ENCODE measurements at regions of chr4 and their contacts with region 1.

Region 1: DNA sequence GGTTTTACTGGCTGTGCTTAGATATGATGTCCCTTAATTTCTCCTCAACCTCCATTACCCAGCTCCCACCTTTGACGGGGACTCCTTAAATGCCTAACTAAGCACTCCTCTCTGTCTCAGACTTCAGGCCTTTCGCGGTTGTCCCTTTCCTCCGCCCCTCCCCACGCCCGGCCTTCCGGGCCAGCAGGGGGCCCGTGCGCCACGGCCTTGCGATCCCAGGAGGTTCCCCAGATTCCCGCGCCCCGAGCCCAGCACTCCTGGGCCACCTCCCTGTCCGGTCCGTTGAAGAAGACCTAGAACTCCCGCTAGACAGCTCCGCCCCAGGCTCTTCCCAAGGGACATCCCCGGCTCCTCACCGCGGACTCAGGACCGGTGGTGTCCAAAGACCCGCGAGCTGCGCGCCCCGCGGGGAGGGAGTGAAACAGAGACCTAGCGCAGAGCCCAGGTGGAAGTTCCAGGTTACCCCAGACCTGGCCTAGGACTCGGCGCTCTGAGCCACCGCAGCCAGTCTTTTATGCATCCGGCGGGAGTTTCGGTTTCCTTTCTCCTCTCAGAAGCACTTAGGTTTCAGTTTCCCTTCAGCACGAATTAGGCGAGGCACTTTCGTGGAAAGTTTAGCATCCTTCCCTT is at the start of gene DDX60:
- DNase-seq: peak; percentile 94
- H3K4me3 Mint-ChIP-seq: peak within 1 kb of the TSS; percentile 97
- H3K27ac Mint-ChIP-seq: peak within 1 kb of the TSS; percentile 99
- H3K4me1 Mint-ChIP-seq: peaks cover 67% of the 10 kb centered on the region
- H3K27me3 Mint-ChIP-seq: no peaks in the 10 kb centered on the region
- total RNA-seq, gene DDX60: 125 to 127 TPM

Region 2: GRCh38 chr4:168028568-168028967 is 289.8 kb before region 1 on chr4:
- CTCF ChIA-PET with region 1: no interaction called
- POLR2A ChIA-PET with region 1: no interaction called
- DNase-seq: no peak
- H3K4me3 Mint-ChIP-seq: no peak overlapping the region
- H3K27ac Mint-ChIP-seq: no peak overlapping the region
- H3K4me1 Mint-ChIP-seq: no peaks in the 10 kb centered on the region
- H3K27me3 Mint-ChIP-seq: no peaks in the 10 kb centered on the region

Region 3: DNA sequence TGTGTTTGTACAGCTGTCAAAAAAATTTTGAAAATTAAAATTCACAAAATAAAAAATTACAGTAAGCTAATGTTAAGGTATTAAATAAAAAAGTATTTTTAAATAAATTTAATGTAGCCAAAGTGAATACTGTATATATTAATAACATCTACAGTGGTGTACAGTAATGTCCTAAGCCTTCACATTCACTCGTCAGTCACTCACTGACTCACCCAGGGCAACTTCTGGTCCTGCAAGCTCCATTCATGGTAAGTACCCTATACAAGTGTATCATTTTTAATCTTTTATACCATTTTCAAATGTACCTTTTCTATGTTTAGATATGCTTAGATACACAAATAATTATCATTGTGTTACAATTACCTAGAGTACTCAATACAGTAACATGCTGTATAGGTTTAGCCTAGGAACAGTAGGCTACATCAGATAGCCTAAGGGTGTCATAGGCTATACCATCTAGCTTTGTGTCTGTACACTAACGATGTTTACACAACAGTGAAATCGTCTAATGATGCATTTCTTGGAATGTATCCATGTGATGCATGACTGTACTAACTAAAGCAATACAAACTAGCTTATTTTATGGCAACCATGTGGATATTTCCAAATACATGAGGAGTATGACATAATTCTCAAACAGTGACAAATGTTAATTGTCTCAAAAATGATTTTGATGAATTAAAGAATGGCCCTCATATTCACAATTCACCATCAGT is 13.5 kb before region 1 on chr4:
- CTCF ChIA-PET with region 1: interaction called, 10 read pairs
- POLR2A ChIA-PET with region 1: no interaction called
- DNase-seq: no peak
- H3K4me3 Mint-ChIP-seq: no peak overlapping the region
- H3K27ac Mint-ChIP-seq: no peak overlapping the region
- H3K4me1 Mint-ChIP-seq: peaks cover 40% of the 10 kb centered on the region
- H3K27me3 Mint-ChIP-seq: no peaks in the 10 kb centered on the region